ENCODE measurements at regions of chr6 and their contacts with region 1.

Region 1: DNA sequence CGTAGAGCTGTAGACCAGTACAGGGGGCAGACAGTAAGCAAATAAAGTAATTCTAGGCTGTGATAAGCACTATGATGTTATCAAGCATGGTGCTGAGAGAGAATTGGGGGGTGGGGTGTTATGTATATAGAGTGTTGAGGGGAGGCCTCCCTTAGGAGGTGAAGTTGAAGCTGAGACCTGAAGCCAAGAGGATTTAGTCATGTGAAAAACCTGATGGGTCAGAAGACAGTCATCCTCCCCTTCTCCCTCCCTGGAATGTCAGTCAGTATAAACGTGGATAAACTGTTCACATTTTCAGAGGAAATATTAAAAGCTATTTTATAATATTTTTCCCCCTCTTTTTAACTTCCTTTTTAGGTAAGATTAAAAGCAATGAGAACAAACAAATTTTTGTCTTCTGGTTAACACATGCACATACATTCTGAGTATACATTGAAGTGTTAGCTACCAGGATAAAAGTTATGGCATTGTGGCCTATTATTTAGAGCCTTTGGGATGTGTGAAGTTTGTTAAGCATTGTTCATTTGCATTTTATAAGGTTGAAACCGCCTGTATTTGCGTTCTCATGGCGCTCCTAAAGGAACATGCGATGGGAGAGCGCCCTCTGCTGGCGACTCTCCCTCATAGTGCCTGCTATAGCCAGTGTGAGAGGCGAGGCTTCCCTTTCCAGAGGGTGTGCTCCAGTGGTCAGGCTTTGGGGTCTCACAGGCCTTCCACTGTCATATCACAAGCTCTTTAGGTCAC is 35.4 kb upstream of the MAPK13 start:
- DNase-seq: peak; percentile 81 to 92
- ATAC-seq: peak; percentile 81

Region 2: GRCh38 chr6:35678021-35678654 is 416.8 kb before region 1 on chr6:
- intact Hi-C with region 1: no loop called
- DNase-seq: no peak
- ATAC-seq: no peak

Region 3: DNA sequence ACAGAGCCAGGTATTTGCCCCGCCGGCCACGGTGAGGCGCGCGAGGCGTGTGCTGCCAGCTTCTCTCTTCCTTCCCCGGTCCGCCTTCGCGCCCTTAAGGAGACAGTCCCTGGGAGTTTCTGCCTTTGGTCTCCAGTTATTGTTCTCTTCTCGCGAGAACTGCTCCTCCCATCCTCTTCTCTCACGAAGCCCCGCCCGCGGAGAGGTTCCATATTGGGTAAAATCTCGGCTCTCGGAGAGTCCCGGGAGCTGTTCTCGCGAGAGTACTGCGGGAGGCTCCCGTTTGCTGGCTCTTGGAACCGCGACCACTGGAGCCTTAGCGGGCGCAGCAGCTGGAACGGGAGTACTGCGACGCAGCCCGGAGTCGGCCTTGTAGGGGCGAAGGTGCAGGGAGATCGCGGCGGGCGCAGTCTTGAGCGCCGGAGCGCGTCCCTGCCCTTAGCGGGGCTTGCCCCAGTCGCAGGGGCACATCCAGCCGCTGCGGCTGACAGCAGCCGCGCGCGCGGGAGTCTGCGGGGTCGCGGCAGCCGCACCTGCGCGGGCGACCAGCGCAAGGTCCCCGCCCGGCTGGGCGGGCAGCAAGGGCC is 67.3 kb before region 1 on chr6 and contains the start of gene MAPK14:
- intact Hi-C with region 1: loop called (anchors 2 to 10 kb)
- DNase-seq: peak; percentile 99 to 100
- ATAC-seq: peak; percentile 86
- total RNA-seq, gene MAPK14: 60.0 to 69.8 TPM